PC-9 (cell line): ENCODE measurements at regions of chr5 and their contacts with region 1.

Region 1: GRCh38 chr5:17189381-17190036 is 27.9 kb upstream of the BASP1 start:
- DNase-seq: peak; percentile 56 to 86
- H3K4me3 ChIP-seq: no peak overlapping the region
- H3K27ac ChIP-seq: no peak overlapping the region
- H3K4me1 ChIP-seq: peaks cover 10% of the 10 kb centered on the region
- H3K27me3 ChIP-seq: no peaks in the 10 kb centered on the region
- CTCF ChIP-seq: peak; percentile 99

Region 2: GRCh38 chr5:16626663-16627264 is 562.7 kb before region 1 on chr5:
- CTCF ChIA-PET with region 1: no interaction called
- POLR2A ChIA-PET with region 1: interaction called, 16 read pairs
- intact Hi-C with region 1: no loop called
- DNase-seq: no peak
- H3K4me3 ChIP-seq: no peak overlapping the region
- H3K27ac ChIP-seq: no peak overlapping the region
- H3K4me1 ChIP-seq: no peaks in the 10 kb centered on the region
- H3K27me3 ChIP-seq: peaks cover 72% of the 10 kb centered on the region
- CTCF ChIP-seq: no peak

Region 3: GRCh38 chr5:16791036-16791705 is 398.3 kb before region 1 on chr5:
- CTCF ChIA-PET with region 1: interaction called, 22 read pairs
- POLR2A ChIA-PET with region 1: no interaction called
- intact Hi-C with region 1: loop called (anchors 1 kb)
- DNase-seq: peak; percentile 48 to 55
- H3K4me3 ChIP-seq: no peak overlapping the region
- H3K27ac ChIP-seq: no peak overlapping the region
- H3K4me1 ChIP-seq: no peaks in the 10 kb centered on the region
- H3K27me3 ChIP-seq: no peaks in the 10 kb centered on the region
- CTCF ChIP-seq: peak; percentile 92

Region 4: DNA sequence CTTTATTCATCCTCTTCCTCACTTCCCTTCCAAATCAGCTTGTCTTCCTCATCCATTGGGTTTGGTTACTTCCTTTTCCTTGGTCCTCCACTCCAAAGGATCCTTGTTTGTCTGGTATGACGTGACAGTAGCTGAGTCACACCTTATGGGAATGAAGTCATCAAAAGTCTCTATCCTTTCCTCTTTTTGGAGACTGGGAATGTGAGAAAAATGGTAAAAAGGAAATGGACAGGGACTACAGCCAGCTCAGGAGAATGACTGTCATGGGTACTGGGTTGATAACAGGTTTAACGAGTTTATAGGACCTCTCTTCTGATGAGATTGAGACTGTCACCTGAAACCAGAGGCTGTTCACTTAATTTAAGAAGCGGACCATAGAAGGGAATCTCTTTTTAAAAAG is 177.2 kb before region 1 on chr5:
- CTCF ChIA-PET with region 1: interaction called, 3 read pairs
- POLR2A ChIA-PET with region 1: no interaction called
- intact Hi-C with region 1: loop called (anchors 10 kb)
- DNase-seq: peak; percentile 59 to 90
- H3K4me3 ChIP-seq: no peak overlapping the region
- H3K27ac ChIP-seq: peak overlapping the region; percentile 69
- H3K4me1 ChIP-seq: peaks cover 22% of the 10 kb centered on the region
- H3K27me3 ChIP-seq: no peaks in the 10 kb centered on the region
- CTCF ChIP-seq: no peak

Region 5: DNA sequence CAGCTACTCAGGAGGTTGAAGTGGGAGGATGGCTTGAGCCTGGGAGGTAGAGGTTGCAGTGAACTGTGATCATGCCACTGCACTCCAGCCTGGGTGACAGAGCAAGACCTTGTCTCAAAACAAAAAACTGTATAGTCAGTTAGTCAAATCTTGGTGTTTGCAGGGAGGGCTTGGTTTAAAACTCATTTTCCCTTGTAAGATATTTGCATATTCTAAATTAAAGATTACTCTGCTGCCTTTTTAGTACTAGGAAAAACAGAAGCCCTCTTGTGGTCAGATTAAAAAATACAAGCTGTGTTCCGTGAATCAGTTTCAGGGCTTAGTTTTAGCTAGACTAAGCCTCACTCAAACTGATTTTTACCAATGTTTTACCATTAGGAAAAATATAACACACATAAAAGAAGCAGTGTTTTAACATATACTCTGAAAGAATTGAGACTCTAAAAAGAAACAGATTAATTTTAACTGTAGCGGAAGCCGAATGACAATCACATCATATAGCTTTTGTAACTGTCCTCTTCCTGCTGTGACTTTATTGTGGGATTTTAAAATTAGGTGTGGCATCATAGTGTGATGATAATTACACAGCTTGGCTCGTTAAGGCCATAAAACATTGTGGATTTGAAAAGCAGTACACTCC is 56.9 kb before region 1 on chr5:
- CTCF ChIA-PET with region 1: interaction called, 18 read pairs
- POLR2A ChIA-PET with region 1: no interaction called
- intact Hi-C with region 1: loop called (anchors 1 kb)
- DNase-seq: no peak
- H3K4me3 ChIP-seq: no peak overlapping the region
- H3K27ac ChIP-seq: no peak overlapping the region
- H3K4me1 ChIP-seq: peaks cover 10% of the 10 kb centered on the region
- H3K27me3 ChIP-seq: no peaks in the 10 kb centered on the region
- CTCF ChIP-seq: peak; percentile 92